Posterior cingulate gyrus (tissue), 11 donors: ENCODE measurements at regions of chr12 and their contacts with region 1.

Region 1: DNA sequence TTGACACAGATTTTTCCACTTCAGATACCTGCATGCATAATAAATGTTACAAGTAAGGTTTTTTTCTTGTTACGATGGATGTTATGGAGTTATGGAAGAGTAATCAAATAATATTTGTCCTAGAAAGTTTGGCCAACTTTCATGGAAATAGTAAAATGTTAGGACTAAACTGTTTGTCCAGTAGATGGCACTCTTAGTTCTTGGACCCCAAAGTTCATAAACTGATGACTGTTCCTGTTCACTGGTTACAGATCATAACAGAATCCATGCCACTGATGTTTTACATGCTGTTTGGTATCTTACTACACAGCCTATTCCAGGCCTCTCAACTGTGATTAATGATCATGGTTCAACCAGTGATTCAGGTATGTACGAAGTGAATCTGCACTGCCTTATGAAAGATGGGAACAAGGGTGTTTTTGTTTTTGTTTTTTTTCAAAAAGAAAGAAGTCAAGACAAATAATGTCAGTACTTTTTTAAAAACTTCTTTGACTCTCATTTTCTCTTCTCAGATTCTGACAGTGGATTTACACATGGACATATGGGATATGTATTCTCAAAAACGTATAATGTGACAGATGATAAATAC is 48.8 kb upstream of the SLCO1C1 start:
- DNase-seq: no peak

Region 2: DNA sequence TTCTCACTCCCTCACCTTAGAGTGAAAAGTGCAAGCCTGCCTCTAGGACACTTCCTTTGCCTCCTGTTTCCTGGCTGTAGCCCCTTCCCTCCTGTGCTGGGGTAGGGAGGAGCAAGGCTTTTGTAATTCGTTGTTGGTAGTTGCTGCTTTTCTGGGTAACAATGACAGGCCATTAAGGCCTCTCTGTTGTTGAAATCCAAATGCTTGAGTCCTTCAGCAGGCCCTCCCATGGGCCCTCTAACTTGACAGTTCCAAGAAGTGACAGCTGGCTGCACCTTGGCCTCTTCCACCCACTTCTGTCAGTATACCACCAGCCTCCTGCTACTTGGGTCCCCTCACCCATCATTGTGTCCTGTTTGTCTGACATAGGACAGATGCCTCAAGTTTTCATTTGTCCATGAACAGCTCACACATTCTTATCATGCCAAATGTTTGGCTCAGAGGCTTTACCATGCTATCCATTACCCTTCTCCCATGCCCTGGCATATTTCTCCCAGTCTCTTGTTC is 381.7 kb before region 1 on chr12:
- intact Hi-C with region 1: no loop called
- DNase-seq: no peak

Region 3: DNA sequence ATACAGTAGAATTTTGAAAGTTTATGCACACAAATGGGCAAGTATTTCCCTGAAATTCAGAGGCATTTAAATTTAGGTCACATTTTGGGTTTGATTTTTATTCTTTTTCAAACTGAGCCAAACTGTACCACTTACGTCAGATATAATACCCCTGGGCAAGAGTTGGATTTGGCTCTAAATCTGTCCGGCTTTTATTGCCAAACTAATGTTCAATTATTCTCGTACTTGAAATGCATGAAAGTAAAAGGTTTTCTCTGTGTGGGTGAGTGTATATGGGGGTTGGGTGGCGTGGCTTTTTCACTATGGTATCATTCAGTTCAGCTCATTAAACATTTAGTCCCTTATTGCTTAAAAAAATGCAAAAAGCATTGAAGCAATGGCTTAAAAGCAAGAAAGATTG is 104.7 kb after region 1 on chr12:
- intact Hi-C with region 1: no loop called
- DNase-seq: no peak

Region 4: DNA sequence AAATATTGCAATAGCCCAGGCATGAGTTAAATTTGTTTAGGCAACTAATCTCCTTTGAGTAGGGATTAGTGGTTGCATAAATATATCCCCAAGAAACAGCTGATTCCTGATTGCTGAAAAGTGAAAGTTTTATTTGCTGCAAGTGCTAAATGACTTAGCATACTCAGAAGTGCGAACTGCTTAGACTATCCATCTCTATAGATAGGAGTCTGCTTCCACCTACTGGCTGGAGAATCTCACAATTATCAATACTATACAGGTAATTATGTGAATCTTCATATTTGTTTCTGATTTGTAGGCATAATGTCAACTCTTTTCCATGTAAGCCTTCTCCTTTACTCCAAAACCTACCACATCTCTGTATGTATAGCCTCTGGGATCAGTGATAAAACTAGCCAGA is 152.2 kb after region 1 on chr12:
- intact Hi-C with region 1: loop called (anchors 10 kb)
- DNase-seq: no peak

Region 5: DNA sequence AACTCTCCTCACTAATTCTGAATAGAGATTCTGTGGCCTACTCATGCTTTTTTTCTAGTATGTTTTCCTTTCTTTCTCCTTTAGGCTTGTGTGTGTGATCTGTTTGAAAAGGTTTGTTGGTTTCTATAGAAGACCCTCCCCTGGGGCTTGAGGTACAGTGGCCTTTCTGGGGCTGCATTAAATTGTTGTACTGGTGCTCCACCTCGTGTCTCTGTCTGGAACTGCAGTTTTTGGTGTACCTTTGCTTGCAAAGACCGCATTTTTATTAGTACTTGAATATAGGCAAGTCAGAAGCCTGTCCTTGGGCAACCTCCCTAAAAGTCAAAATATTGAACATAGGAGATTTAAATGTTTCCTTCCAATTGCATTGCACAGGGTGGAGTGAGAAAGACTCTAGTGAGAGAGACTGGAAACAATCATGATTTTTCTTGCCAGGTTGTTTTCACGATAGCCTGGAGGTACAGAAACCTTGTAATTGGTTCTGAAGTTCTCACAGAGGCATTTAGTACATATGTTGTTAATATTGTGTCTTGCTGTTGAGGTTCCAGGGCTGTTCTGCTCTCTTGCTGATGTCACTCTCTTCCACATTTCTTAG is 523.6 kb after region 1 on chr12:
- intact Hi-C with region 1: loop called (anchors 5 kb)
- DNase-seq: peak in 1 of 10 donors; percentile 18